ENCODE measurements at regions of chr10 and their contacts with region 1.

Region 1: DNA sequence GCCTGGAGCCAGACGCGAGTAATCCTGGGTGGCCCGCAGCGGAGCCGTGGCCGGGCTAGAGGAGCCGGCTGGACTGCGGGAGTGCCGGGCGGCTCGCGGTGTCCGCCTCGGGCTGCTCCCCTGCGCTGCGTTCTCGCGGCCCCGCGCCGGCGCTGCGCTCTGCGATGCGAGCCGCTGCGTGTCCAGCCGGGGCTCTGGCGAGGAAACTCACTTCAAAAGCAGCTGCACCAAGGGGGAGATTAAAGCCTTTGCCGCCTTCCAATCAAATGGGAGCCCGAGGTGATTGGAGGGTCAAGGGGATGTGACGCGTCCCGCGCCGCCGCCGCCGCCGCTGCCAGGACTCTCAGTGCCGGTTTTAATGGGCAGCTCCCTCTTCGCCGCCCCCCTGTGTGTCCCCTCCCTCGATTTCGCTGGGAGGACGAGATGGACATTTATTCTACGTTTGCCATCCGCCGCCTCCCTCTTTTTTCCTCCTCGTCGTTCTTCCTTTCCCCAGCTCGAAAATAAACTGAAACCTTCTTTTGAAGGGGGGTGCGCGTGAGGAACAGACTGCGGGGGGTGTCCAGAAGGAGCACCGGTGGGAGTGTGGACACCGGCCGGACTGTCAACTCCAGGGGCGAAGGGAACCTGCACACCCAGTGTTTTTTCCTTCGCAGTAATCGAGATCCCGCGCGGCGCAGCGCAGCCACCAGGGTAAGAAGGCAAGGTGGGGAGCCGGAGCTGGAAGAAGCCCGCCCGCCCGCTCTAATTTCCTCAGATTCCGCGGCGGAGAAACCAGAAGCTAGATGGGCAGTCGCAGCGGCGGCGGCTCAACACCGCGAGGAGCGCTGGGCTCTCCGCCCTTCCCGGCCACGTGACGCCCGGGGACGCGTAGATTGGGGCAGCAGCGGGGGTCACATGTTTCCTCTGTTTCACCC is at the start of gene ZNF503:
- DNase-seq: peak; percentile 98 to 99 (median 99)
- ATAC-seq: peak; percentile 87 to 89
- H3K4me3 ChIP-seq: peak within 1 kb of the TSS; percentile 82
- H3K27ac ChIP-seq: peak within 1 kb of the TSS; percentile 89
- H3K4me1 ChIP-seq: no peaks in the 10 kb centered on the region
- H3K27me3 ChIP-seq: no peaks in the 10 kb centered on the region
- total RNA-seq, gene ZNF503: 13.2 to 14.6 (median 14.3) TPM

Region 2: DNA sequence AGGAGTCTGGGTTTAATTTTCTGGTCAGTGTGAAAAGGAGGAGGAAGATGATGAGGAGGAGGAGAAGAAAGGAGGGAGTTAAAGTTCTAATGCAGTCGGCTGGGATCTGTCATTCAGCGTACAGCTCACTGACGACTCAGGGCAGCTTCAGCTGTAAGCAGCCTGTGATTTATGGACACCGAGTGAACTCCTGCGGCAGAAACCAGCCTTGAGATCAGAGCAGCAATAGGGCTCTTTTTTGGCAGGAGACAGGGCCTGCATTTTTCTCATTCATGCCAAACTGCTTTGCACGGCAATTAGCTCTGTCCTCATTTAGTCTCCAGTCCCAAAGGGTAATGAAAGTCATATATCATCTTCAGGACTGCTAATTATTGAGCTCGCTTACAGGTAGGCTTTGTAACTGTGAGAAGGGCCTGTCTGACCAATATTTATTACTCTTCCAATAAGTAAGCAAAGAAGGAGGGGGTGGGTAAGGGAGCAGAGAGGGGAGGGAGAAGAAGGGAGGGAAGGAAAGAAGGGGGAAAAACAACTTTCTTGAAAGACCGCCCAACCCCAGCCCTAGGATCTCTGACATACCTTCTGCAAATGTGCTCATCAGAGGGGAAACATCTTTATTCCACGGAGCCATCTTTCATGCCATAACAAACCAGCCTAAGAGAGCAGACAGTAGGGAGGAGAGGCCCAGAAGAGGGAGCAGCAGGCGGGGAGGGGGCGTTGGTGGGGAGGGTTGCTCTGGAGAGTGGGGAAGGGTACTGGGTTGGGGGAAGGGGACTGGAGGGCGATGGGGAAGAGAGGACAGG is 118.0 kb before region 1 on chr10:
- intact Hi-C with region 1: no loop called
- DNase-seq: peak in 1 of 3 donors; percentile 63
- ATAC-seq: peak; percentile 54 to 69
- H3K4me3 ChIP-seq: peak overlapping the region; percentile 40
- H3K27ac ChIP-seq: peak overlapping the region; percentile 25
- H3K4me1 ChIP-seq: peaks cover 5% of the 10 kb centered on the region
- H3K27me3 ChIP-seq: no peaks in the 10 kb centered on the region

Region 3: GRCh38 chr10:75651417-75651816 is 249.6 kb after region 1 on chr10:
- intact Hi-C with region 1: loop called in 2 of 4 experiments (anchors 10 kb)
- DNase-seq: peak in 1 of 3 donors; percentile 63
- ATAC-seq: peak in 1 of 2 donors; percentile 35
- H3K4me3 ChIP-seq: no peak overlapping the region
- H3K27ac ChIP-seq: no peak overlapping the region
- H3K4me1 ChIP-seq: peaks cover 13% of the 10 kb centered on the region
- H3K27me3 ChIP-seq: no peaks in the 10 kb centered on the region

Region 4: GRCh38 chr10:75904499-75905283 is 502.9 kb after region 1 on chr10:
- intact Hi-C with region 1: loop called in 2 of 4 experiments (anchors 10 kb)
- DNase-seq: no peak
- ATAC-seq: peak; percentile 51 to 65
- H3K4me3 ChIP-seq: peak overlapping the region; percentile 52
- H3K27ac ChIP-seq: no peak overlapping the region
- H3K4me1 ChIP-seq: no peaks in the 10 kb centered on the region
- H3K27me3 ChIP-seq: no peaks in the 10 kb centered on the region

Region 5: DNA sequence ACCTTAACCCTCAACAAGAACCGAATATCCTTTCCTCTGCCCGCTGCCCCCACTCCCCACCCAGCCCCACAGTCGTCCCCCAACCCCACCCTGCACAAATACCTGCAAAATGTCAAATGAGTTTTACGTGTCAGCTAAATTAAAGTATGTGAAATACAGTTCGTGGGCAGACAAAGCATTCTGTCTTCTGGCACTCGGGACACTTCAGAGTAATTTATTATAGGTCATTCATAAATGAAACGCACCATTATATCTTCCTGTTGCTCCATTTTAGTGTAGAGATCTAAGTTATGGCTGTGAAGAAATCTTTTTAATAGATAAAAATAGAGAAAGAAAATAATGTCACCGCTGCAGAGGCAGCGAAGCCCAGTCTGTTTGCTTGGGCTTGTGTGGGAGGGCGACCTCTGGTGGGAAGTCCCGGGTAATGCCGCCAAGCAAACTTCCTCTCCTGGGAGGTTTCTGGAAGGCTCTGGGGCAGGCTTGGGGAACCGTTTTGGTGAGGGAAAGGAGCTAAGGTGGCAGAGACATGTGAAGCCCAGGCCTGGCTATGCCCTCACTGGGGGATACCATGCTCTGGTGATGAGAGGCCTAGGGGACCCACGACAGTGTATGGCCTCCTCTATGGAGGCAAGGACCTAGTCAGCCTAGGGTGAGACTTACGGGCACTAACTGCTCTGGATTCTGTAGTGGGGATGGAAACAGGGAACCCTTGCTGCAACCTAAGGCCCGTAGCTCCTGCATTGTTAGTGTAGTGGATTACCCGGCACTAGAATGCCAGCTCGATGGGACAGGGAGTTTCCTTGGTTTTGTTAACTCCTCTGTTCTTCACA is 634.5 kb after region 1 on chr10:
- intact Hi-C with region 1: loop called (anchors 2 to 10 kb)
- DNase-seq: peak; percentile 72 to 89 (median 87)
- ATAC-seq: peak; percentile 82 to 86
- H3K4me3 ChIP-seq: peak overlapping the region; percentile 27
- H3K27ac ChIP-seq: no peak overlapping the region
- H3K4me1 ChIP-seq: no peaks in the 10 kb centered on the region
- H3K27me3 ChIP-seq: no peaks in the 10 kb centered on the region

Region 6: GRCh38 chr10:76547352-76547972 is 1145.6 kb after region 1 on chr10:
- intact Hi-C with region 1: loop called in 2 of 4 experiments (anchors 10 kb)
- DNase-seq: peak; percentile 73 to 89 (median 82)
- ATAC-seq: peak; percentile 22 to 73
- H3K4me3 ChIP-seq: no peak overlapping the region
- H3K27ac ChIP-seq: no peak overlapping the region
- H3K4me1 ChIP-seq: no peaks in the 10 kb centered on the region
- H3K27me3 ChIP-seq: no peaks in the 10 kb centered on the region

Measured in right cardiac atrium (tissue), 5 donors.